MCF 10A (cell line): ENCODE measurements at regions of chr4 and their contacts with region 1.

Region 1: GRCh38 chr4:173013232-173013930 is 155.2 kb upstream of the GALNT7 start:
- DNase-seq: peak; percentile 46
- H3K4me3 Mint-ChIP-seq: no peak overlapping the region
- H3K27ac Mint-ChIP-seq: no peak overlapping the region
- H3K4me1 Mint-ChIP-seq: no peaks in the 10 kb centered on the region
- H3K27me3 Mint-ChIP-seq: no peaks in the 10 kb centered on the region
- CTCF ChIP-seq: peak; percentile 59

Region 2: DNA sequence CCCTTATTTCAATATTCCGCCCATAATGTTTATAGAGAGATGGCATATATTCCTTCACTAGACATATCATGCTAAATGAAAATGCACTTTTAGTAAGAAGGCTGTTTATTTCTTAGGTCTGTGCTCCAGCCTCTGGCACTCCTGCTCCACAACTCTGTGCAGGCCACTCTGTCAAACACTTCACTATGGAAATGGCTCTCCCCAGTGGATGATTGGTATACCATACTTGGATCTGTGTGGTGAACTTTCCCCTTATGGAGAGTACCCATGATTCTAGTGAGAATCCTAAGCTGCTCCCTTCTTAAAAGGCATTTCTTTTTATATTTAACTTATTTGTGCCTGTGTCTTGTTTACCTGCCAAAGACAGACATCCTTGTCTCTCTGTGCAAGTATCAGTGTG is 324.8 kb before region 1 on chr4:
- CTCF ChIA-PET with region 1: no interaction called
- POLR2A ChIA-PET with region 1: no interaction called
- intact Hi-C with region 1: no loop called
- DNase-seq: no peak
- H3K4me3 Mint-ChIP-seq: no peak overlapping the region
- H3K27ac Mint-ChIP-seq: no peak overlapping the region
- H3K4me1 Mint-ChIP-seq: no peaks in the 10 kb centered on the region
- H3K27me3 Mint-ChIP-seq: peaks cover 41% of the 10 kb centered on the region
- CTCF ChIP-seq: no peak

Region 3: DNA sequence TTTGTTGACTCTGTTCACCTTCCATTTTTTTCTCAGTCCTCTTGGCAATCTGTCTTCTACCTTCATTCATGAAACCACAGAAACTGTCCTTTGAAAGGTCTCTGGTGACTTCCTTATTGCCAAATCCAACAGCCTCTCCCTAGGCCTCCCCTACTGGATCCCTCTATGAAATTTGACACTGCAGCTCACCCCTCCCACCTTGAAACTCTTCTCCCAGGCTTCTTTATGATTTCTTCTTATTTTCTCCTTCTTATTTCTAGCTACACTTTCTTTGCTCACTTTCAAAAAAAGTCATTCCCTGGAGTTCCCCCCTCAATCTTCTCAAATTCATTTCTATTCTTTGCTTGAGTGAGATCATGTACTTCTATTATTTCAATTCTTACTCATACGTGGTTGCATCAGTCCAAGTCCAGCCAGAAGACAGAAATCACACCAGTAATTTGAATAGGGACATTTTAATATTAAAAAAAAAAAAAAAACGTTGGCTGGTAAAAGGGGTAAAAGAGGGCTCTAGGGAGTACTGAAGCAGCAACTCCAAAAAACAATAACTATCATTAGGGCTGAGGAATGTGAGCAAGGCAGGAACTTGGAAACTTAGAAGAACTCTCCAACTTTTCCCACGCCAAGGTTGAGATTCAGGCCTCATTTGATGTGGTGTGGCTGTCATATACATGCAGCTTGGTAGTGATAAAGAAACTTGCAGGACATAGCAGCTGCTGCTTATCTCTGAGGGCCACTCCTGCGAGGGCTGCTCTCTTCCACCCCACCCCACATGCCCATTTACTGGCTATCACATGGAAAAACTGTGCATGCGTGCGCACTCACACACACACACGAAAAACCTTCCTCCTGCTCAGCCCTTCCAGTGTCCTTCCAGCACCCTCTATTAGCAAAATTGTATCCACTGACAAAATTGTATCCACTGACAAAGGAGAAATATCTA is 14.6 kb before region 1 on chr4:
- CTCF ChIA-PET with region 1: interaction called, 32 read pairs
- POLR2A ChIA-PET with region 1: interaction called, 5 read pairs
- intact Hi-C with region 1: no loop called
- DNase-seq: peak; percentile 77
- H3K4me3 Mint-ChIP-seq: peak overlapping the region; percentile 15
- H3K27ac Mint-ChIP-seq: peak overlapping the region; percentile 60
- H3K4me1 Mint-ChIP-seq: peaks cover 52% of the 10 kb centered on the region
- H3K27me3 Mint-ChIP-seq: peaks cover 7% of the 10 kb centered on the region
- CTCF ChIP-seq: no peak

Region 4: DNA sequence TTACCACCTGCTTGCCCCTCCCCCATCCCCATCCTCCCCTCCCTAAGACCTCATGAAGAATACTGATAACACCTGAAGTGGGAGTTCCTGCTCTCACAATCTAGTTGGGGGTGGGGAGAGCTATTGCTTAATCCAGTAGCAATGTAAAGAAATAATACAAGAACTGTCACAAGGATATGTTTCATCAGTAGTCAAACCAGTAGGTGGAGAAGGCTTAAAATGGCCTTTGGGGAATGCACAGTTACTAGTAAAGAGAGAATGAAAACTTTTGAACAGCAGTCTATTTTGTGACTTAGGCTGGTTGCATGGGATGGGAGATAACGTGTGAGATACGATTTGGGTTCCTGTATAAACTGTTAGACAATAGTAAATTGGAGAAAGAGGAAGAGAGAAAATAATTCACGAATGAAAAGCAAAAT is 161.2 kb after region 1 on chr4:
- CTCF ChIA-PET with region 1: interaction called, 15 read pairs
- POLR2A ChIA-PET with region 1: interaction called, 4 read pairs
- intact Hi-C with region 1: loop called (anchors 1 kb)
- DNase-seq: no peak
- H3K4me3 Mint-ChIP-seq: no peak overlapping the region
- H3K27ac Mint-ChIP-seq: no peak overlapping the region
- H3K4me1 Mint-ChIP-seq: peaks cover 36% of the 10 kb centered on the region
- H3K27me3 Mint-ChIP-seq: no peaks in the 10 kb centered on the region
- CTCF ChIP-seq: no peak

Region 5: GRCh38 chr4:173257732-173258717 is 244.6 kb after region 1 on chr4:
- CTCF ChIA-PET with region 1: interaction called, 127 read pairs
- POLR2A ChIA-PET with region 1: interaction called, 11 read pairs
- intact Hi-C with region 1: loop called (anchors 1 kb)
- DNase-seq: peak; percentile 70
- H3K4me3 Mint-ChIP-seq: no peak overlapping the region
- H3K27ac Mint-ChIP-seq: no peak overlapping the region
- H3K4me1 Mint-ChIP-seq: peaks cover 5% of the 10 kb centered on the region
- H3K27me3 Mint-ChIP-seq: no peaks in the 10 kb centered on the region
- CTCF ChIP-seq: peak; percentile 77

Region 6: GRCh38 chr4:173301518-173302201 is 288.3 kb after region 1 on chr4:
- CTCF ChIA-PET with region 1: interaction called, 21 read pairs
- POLR2A ChIA-PET with region 1: no interaction called
- intact Hi-C with region 1: loop called (anchors 1 kb)
- DNase-seq: peak; percentile 45
- H3K4me3 Mint-ChIP-seq: no peak overlapping the region
- H3K27ac Mint-ChIP-seq: no peak overlapping the region
- H3K4me1 Mint-ChIP-seq: no peaks in the 10 kb centered on the region
- H3K27me3 Mint-ChIP-seq: no peaks in the 10 kb centered on the region
- CTCF ChIP-seq: peak; percentile 41